Left cardiac atrium (tissue), 4 donors: ENCODE measurements at regions of chr2 and their contacts with region 1.

Region 1: DNA sequence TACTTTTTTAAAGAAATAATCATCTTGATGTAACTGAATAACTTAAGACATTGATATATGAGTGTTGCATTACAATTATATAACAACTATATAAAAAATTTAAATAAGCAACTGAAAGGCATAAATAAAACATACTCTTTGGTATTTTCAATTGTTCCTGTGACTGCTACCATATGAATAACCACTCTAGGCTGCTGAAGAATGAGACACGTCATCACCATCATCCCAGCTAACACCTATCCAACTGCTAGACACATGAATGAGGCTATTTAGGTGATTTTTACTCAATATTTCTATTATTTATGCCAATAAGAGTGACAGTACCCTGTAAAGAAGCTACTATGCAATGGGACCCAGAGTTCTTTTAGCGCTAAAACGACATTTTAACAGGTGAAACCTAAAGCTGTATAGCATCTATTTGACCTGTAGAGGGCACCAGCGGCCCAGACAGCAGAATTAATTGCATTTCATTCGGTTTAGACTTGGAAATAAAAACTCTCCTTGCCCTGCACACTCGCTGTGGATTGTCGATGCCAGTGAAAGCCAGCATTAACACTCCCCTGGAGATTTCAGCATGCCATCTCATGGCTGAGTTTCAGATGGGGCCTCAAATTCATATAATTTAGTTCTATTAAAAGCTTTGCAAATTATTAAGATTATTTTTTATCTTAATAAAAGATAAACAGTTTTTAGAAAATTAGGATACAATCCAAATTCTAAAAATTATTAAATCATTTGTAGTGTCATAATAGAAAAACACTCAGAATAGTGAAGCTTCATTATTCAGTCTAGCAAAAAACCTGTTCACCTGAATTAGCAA is 89.4 kb upstream of the MAP2 start:
- DNase-seq: peak; percentile 43
- ATAC-seq: peak; percentile 30 to 54

Region 2: GRCh38 chr2:209556354-209556961 is 222.1 kb after region 1 on chr2:
- intact Hi-C with region 1: loop called in 1 of 2 experiments (anchors 5 kb)
- DNase-seq: no peak
- ATAC-seq: peak; percentile 65 to 77

Region 3: DNA sequence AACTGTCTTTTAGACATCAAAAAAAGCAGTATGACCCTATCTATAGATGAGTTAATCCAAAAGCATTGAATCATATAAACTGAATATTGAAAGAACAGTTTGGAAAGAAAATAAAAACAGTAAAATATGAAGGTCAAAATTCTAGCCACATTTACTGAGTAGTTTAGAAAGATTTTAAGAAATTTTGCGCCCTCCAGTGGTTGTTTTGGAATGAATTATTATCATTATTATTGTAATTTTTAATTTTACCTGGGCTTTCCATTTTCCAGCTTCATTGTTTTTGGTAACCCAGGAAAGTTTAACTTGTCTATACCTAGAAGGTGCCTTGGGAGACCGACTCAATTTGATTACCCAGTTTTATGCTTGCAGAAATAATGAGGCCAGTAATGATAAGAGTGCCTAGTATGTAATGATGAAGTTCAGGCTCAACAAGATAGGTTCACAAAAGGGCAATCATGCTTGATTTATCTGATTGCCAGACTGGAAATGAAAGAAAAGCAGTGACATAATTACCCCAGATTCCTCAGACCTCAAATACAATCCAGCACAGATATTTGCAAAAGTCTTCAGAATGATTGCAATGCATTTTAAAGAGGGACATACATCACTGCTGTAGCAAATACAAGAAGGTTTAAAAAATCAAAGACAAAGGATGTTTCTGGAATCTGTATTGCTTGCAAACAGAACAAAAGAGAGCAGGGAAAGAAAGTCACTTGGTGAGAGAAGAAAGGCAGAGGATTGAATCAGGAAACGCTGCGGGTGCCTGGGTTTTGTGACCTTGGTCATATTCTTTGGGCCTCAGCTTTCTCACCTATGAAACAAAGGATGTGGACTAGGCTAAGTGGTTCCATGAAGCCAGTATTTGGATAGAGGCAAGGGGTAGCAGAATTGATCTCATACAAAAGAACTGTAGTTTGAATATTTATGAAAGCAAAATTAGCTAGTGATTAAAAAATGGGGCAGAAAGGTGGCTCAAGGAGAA is 243.3 kb after region 1 on chr2:
- intact Hi-C with region 1: loop called in 1 of 2 experiments (anchors 5 kb)
- DNase-seq: no peak
- ATAC-seq: no peak

Region 4: DNA sequence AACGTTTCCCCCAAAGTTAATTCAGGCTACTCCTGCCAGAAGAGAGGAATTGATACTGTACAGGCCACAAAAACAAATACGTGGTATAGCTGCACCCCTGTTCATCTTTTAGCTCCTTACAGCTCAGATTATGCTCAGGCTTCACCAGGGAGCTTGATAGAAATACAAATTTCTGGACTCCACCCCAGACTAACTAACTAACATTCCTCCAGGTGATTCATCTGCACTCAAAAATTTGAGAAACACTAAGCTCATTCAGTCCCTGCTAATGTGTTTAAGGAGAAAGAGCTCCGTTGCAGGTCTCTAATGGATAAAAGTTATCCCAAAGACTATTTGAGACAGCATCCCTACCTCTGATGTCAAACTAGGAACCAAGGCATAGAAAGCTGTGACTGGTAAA is 400.4 kb after region 1 on chr2:
- intact Hi-C with region 1: no loop called
- DNase-seq: no peak
- ATAC-seq: no peak

Region 5: GRCh38 chr2:209960676-209961630 is 626.5 kb after region 1 on chr2:
- intact Hi-C with region 1: loop called (anchors 2 to 10 kb)
- DNase-seq: peak; percentile 32
- ATAC-seq: peak; percentile 47 to 80